ENCODE measurements at regions of chr9 and their contacts with region 1.

Region 1: DNA sequence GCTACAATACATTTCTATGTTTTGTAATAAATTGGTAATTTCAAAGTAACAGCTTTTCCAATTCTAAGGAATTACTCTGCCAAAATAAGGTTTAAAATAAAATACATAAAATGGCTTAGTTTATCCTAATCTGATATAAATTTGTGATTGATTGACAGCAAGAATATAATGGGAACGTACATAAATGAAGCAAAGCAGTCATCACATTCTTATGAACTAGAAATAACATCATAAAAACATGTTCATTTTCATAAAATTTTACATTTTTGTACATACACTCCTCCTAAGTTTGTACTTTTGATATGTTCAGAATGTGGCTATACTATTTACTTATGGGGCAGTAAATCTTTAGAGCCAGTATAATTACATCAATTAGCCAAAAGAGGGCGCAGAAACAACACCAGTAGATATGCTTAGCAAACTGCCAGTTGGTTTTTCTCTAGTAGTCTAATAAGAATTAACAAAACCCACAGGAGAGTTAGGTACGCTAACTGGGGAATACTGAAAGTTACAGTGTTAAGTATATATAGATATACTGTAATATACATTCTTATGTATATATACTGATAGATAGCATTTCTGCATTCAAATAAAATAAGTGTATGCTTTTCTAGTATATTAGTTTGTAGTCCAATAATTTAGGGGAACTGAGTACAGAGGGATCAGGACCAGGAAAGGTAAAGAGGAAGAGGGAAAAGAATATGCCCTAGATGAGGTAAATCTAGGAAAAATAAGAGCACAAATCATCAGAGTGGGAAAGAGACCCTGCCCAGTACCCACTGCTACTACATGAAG is 76.8 kb downstream of the ZDHHC21 start:
- DNase-seq: no peak
- H3K4me3 ChIP-seq: no peak overlapping the region
- H3K27ac ChIP-seq: no peak overlapping the region
- H3K4me1 ChIP-seq: no peaks in the 10 kb centered on the region
- H3K27me3 ChIP-seq: no peaks in the 10 kb centered on the region
- CTCF ChIP-seq: peak; percentile 39 to 66 (median 50)
- EP300 ChIP-seq: no peak
- POLR2A ChIP-seq: no peak

Region 2: GRCh38 chr9:14532716-14533115 is 83.7 kb before region 1 on chr9:
- intact Hi-C with region 1: no loop called
- DNase-seq: no peak
- H3K4me3 ChIP-seq: no peak overlapping the region
- H3K27ac ChIP-seq: no peak overlapping the region
- H3K4me1 ChIP-seq: peaks cover 0 to 9% (median 0%) of the 10 kb centered on the region in 4 donors
- H3K27me3 ChIP-seq: peaks cover 0 to 16% (median 0%) of the 10 kb centered on the region in 4 donors
- CTCF ChIP-seq: no peak
- EP300 ChIP-seq: no peak
- POLR2A ChIP-seq: no peak

Region 3: DNA sequence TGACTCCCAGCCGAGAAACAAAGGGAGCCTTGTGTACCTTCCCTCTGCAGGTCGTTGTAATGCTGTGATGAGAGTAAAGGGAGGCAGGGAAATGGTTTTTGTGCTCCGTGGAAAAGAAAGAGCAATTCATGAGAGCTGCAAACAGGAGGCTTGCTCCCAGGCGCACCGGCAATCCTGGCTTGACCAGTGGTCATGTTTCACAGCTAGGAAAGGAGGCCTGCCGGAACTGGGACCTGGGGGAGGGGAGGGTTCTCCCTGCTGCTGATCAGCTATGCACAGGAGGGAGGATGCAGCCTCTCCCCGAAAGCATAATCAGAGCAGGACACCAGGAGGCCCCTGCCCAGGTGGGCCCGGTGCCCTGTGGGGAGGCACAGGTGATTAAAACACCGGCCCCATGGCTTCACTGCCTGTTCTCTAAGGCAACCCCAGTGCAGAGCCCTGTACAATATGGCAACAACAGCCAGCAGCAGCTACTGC is 54.4 kb before region 1 on chr9:
- intact Hi-C with region 1: no loop called
- DNase-seq: no peak
- H3K4me3 ChIP-seq: no peak overlapping the region
- H3K27ac ChIP-seq: no peak overlapping the region
- H3K4me1 ChIP-seq: no peaks in the 10 kb centered on the region
- H3K27me3 ChIP-seq: no peaks in the 10 kb centered on the region
- CTCF ChIP-seq: no peak
- EP300 ChIP-seq: no peak
- POLR2A ChIP-seq: no peak

Region 4: DNA sequence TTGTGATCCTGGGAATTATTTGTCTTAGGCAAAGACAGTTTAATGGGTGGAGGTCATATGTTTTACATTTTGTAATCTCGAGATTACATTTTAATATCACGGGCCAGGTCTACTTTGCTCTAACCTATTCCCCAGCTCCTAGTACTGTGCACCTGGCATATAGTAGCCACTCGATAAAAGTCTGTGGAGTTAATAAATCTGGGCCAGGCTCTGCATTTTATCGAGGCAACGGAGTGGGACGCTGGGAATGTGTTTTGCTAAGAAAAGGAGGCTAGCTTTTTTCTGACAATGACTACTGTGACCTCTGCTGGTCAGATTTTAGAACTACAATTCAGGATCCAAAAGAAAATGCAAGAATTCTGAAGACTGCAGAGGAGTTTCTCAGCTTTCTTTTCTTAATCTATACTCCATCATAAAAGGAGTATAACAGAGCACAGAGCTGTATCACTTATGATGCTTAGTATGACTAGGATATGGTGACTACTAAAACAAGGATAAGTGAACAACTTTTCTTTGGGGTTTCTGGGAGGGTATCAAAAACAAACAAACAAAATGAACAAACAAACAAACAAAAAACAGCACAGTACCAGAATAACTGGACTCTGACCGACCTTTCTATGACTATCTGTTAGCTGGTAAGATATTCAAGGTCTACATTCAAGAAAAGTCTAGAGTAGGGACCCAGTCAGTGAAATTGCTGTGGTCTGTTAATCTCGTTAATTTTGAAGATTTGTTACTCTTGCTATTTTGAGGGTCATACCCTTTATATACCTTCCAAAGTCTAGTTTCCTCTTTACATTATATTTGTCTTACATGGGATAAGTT is 152.2 kb after region 1 on chr9:
- intact Hi-C with region 1: loop called (anchors 2 kb)
- DNase-seq: no peak
- H3K4me3 ChIP-seq: no peak overlapping the region
- H3K27ac ChIP-seq: no peak overlapping the region
- H3K4me1 ChIP-seq: peaks cover 0 to 4% (median 0%) of the 10 kb centered on the region in 4 donors
- H3K27me3 ChIP-seq: no peaks in the 10 kb centered on the region
- CTCF ChIP-seq: peak; percentile 65 to 83 (median 70)
- EP300 ChIP-seq: no peak
- POLR2A ChIP-seq: no peak

Region 5: DNA sequence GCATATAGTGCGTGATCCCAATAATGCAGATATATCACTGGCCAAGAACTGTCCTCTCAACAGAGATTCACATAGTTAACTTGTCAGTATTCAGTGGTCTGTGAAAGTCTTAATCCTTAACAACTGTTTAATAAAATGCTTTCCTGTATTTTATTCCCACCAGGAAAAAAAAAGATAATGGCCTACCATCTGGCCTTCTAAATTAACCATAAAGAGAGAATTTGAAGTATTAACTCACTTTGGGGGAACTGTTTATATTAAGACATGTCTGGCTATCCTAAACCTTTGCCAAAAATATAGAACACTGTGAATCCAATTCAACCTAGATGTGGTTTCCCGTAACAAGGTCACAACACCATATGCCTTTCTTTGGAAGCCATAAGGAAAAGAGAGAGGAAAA is 294.7 kb after region 1 on chr9:
- intact Hi-C with region 1: no loop called
- DNase-seq: no peak
- H3K4me3 ChIP-seq: no peak overlapping the region
- H3K27ac ChIP-seq: no peak overlapping the region
- H3K4me1 ChIP-seq: peaks cover 3 to 36% (median 21%) of the 10 kb centered on the region in 4 donors
- H3K27me3 ChIP-seq: no peaks in the 10 kb centered on the region
- CTCF ChIP-seq: no peak
- EP300 ChIP-seq: no peak
- POLR2A ChIP-seq: no peak